OCI-LY7 (cell line): ENCODE measurements at regions of chr1 and their contacts with region 1.

Region 1: GRCh38 chr1:16351994-16352841 is at the start of gene FBXO42:
- DNase-seq: peak; percentile 93
- H3K4me3 ChIP-seq: peak within 1 kb of the TSS; percentile 89
- H3K27ac ChIP-seq: peak within 1 kb of the TSS; percentile 72
- H3K4me1 ChIP-seq: peaks cover 29% of the 10 kb centered on the region
- CTCF ChIP-seq: peak; percentile 70
- total RNA-seq, gene FBXO42: 18.1 and 22.9 TPM in 2 replicates

Region 2: GRCh38 chr1:15975805-15976680 is 376.2 kb before region 1 on chr1 and contains the start of gene ZBTB17:
- CTCF ChIA-PET with region 1: no interaction called
- POLR2A ChIA-PET with region 1: no interaction called
- intact Hi-C with region 1: loop called (anchors 10 kb)
- DNase-seq: peak; percentile 98
- H3K4me3 ChIP-seq: peak within 1 kb of the TSS; percentile 78
- H3K27ac ChIP-seq: peak within 1 kb of the TSS; percentile 83
- H3K4me1 ChIP-seq: peaks cover 31% of the 10 kb centered on the region
- CTCF ChIP-seq: peak; percentile 7; the same call in 1 of the 2 replicates
- total RNA-seq, gene ZBTB17: 32.1 and 53.4 TPM in 2 replicates

Region 3: GRCh38 chr1:16236511-16237342 is 115.5 kb before region 1 on chr1 and contains the start of gene CPLANE2:
- CTCF ChIA-PET with region 1: no interaction called
- POLR2A ChIA-PET with region 1: interaction called, 3 read pairs
- intact Hi-C with region 1: loop called (anchors 5 kb)
- DNase-seq: peak; percentile 96
- H3K4me3 ChIP-seq: peak within 1 kb of the TSS; percentile 80
- H3K27ac ChIP-seq: peak within 1 kb of the TSS; percentile 60
- H3K4me1 ChIP-seq: peaks cover 16% of the 10 kb centered on the region
- CTCF ChIP-seq: no peak; the same call in 1 of the 2 replicates
- total RNA-seq, gene CPLANE2: 7.9 and 11.6 TPM in 2 replicates

Region 4: DNA sequence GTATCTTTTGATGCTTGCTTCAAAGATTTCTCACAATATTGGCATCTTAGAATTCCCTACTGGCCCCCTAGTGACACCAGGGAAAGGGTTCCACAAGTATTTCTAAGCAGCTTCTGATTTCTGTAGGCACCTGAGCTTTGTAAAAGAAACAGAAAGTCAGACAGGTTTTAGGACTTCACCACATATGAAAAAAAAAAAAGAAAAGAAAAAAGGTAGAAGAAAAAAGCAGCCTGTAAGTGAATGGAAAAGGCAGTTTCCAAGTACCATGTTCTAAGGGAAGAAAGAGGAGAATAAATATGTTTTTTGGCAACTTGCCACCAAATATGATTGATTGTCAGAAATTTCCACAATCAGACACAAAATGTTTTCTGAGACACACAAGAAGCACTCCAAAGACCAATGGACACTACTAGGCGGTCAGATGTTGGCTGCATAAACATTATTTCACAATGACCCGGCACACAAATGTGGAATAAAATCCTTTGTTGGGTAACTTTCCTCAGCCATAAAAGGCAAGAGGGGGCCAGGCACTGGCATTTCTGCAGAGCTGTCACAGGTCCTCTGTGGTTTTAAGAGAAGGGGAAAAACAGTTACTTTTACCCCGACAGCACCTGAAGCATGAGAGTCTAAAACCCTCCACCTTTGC is 102.5 kb before region 1 on chr1:
- CTCF ChIA-PET with region 1: no interaction called
- POLR2A ChIA-PET with region 1: interaction called, 3 read pairs
- intact Hi-C with region 1: loop called (anchors 5 kb)
- DNase-seq: no peak
- H3K4me3 ChIP-seq: no peak overlapping the region
- H3K27ac ChIP-seq: peak overlapping the region; percentile 47
- H3K4me1 ChIP-seq: peaks cover 20% of the 10 kb centered on the region
- CTCF ChIP-seq: no peak

Region 5: DNA sequence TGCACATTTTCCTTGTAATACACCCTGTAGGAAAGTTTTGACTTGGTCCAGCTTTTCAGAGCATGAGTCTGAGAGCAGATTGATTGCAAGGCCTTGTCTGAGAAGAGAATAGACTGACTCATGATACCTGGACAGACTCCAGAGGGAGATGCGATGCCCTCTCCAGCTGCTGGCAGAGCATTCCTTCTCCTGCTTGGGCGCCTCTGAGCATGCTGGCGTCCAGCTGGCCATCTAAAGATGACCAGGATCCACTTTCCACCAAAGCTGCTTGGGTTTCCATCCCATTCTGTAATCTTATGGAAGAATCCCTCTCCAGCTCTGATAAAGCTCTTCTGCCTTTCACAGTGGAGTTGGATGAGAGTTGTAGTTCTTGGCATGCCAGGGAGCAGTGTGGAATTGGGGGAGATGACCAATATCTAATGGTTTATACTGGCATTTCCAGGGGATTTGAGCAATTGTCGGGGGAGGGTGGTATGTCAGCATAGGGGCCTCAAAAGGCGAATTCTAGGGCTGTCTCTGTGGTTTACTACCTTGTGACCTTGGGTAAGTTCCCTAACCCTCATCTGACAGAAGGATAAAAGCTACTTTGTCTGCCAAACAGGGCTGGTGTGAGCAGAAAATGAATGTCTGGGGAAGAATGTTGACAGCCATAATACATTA is 34.4 kb after region 1 on chr1:
- CTCF ChIA-PET with region 1: no interaction called
- POLR2A ChIA-PET with region 1: no interaction called
- intact Hi-C with region 1: no loop called
- DNase-seq: no peak
- H3K4me3 ChIP-seq: no peak overlapping the region
- H3K27ac ChIP-seq: no peak overlapping the region
- H3K4me1 ChIP-seq: peaks cover 32% of the 10 kb centered on the region
- CTCF ChIP-seq: no peak